Activated CD8-positive, alpha-beta memory T cell treated with anti-CD3 and anti-CD28 coated beads, Interleukin-2, amount 10 ng/mL, durations not matched to agents 7 days and 5 days (primary cell): ENCODE measurements at regions of chr13 and their contacts with region 1.

Region 1: DNA sequence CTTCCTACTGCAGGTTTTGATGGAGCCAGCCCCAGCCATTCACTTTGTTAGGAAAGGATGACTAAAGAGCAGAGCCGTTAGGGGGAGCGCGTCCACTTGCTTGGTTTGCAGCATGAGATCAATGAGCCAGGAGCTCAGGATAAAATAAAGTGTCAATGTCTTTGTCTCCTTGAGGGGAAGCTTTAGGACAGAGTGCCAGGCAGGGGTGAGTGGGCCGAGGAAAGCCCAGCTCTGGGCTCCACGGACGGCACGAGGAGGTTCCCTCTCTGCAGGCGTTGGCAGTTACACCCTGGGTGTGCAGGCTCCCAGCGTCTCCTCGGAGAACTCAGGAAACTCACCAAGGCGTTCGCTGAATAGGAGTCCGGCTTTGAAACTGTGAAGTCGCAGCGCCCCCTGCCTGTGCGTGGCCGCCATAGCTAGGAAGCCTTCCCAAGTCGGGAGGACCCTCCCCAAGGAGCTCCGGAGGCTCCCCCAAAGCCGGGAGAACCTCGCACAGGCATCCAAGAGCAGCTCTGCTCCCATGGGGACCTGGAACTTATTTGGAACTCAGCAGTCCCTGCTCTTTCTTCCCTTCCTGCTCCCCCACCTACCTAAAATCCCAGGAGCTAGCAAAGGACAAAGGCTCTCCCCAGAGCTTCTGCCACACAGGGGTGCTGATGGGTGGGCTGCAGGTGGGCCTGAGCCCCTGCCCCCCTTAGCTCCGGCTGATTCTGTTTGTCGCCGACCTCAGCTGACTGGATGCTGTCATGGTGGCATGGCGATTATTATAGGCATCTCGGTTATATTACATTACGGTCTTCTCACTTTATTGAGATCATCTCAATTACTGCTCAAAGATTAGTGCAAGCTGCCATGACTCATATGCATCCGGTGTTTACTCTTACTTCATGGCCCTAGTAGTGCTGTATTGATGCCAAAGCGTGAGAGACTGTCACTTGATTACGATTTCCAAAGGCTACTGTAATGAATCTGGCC is 34.4 kb downstream of the GSX1 start:
- DNase-seq: peak; percentile 69
- ATAC-seq: peak; percentile 63
- H3K4me3 Mint-ChIP-seq: no peak overlapping the region
- H3K27ac Mint-ChIP-seq: no peak overlapping the region
- H3K4me1 Mint-ChIP-seq: peaks cover 18% of the 10 kb centered on the region
- H3K27me3 Mint-ChIP-seq: peaks cover 87% of the 10 kb centered on the region

Region 2: DNA sequence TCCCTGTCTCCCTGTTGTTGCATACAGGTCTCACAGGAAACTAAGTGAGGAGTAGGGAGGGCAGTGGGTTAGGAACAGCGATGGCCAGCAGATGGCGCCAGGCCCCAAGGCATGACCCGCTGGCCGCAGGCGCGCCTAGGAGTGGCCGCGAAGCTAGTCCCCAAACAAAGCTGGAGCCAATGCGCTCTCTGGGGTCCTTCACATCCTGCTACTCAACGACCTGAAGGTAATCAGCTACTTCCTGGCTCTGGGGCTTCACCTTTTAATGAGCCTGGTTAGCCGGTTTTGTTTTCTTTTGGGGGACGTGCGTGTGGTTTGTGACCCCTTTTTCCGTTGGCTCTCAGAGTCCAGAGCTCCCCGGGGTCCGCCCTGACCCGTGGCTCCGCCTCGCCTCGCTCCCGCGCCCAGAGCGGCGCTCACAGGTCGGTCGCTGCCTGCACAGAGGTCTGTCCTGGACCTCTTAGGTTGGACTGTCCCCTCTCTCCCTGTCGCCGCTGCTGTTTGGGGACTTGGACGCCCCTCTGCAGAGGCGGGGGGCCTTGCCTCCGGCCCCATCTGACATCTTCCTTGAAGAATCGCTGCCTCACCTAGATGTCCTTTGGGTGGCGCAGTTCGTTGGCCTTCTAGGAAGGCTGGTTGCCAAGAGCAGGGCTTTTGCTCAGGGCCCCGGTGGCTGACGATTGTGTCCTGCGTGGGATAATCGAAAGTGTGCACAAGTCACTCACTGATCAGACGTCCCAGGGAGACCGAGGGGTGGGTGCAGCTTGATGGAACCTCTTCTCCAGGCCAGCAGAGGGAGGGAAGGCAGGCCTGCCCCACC is 464.4 kb before region 1 on chr13:
- CTCF ChIA-PET with region 1: interaction called, 167 read pairs
- DNase-seq: peak; percentile 89
- ATAC-seq: peak; percentile 96
- H3K4me3 Mint-ChIP-seq: peak overlapping the region; percentile 50
- H3K27ac Mint-ChIP-seq: no peak overlapping the region
- H3K4me1 Mint-ChIP-seq: peaks cover 9% of the 10 kb centered on the region
- H3K27me3 Mint-ChIP-seq: peaks cover 31% of the 10 kb centered on the region

Region 3: DNA sequence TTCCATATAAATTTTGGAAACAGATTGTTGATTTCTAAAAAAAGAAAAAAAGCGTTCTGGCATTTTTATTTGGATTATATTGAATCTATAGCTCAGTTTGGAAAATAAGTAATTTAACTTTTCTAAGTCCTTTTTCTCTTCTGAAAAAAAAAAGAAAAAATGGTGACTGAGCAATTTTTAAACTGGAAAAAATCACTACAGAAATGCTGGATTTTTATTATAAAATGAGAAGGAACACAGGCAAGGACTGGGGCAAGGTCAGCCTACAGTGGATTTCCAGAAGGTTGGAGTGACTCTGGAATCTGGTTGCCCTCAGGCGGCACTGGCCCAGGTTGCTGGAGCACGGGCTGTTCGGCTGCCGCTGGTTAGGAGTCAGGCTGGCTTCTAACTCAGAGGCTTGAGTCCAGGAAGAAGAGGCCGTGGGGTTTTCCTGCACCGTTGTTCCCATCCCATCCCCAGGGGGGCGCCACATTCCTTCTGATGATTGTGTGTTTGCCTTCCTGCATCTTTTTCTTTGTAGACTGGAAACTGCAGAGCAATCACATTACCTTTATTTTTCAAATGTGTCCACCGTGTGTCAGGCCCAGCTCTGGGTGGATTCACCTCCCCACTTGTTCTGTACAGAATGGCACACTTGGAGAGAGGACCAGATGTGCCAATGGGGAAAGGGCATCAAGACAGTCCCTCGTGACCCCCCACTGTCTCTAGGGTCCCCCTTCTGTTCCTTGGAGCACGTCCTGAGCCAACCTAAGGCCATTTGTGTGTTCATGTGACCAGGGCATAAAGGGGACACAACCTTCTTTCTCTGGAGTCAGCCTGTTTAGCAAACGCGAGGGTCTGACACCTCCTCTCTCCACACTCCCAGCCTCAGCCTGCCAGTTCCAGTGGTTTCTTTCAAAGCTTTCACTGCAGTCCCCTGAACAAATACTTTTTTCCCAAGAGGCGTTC is 446.7 kb before region 1 on chr13:
- CTCF ChIA-PET with region 1: interaction called, 29 read pairs
- DNase-seq: peak; percentile 72
- ATAC-seq: peak; percentile 65
- H3K4me3 Mint-ChIP-seq: no peak overlapping the region
- H3K27ac Mint-ChIP-seq: no peak overlapping the region
- H3K4me1 Mint-ChIP-seq: peaks cover 1% of the 10 kb centered on the region
- H3K27me3 Mint-ChIP-seq: peaks cover 12% of the 10 kb centered on the region

Region 4: GRCh38 chr13:27770809-27771208 is 55.9 kb before region 1 on chr13:
- CTCF ChIA-PET with region 1: interaction called, 46 read pairs
- DNase-seq: peak; percentile 51
- ATAC-seq: no peak
- H3K4me3 Mint-ChIP-seq: no peak overlapping the region
- H3K27ac Mint-ChIP-seq: no peak overlapping the region
- H3K4me1 Mint-ChIP-seq: no peaks in the 10 kb centered on the region
- H3K27me3 Mint-ChIP-seq: peaks cover 34% of the 10 kb centered on the region

Region 5: DNA sequence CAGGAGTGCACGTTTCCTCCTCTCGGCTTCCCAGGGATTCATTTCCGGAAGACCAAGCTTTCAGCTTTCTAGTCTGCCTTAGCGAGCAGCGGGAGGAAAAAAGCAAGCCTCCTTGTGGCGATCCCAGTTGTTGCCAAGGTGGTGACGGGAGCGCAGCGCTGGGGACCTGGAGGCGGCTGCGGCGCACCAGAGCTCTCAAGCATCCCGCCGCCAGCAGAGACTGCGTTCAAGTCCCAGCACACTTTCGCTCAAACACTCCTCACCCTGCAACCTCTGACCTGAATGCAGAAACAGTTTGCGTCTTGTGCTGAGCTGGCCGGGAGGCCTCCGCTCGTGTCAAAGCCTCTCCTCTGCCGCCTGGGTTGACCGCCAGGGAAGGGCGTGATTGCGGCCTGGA is 29.4 kb before region 1 on chr13:
- CTCF ChIA-PET with region 1: interaction called, 16 read pairs
- DNase-seq: no peak
- ATAC-seq: no peak
- H3K4me3 Mint-ChIP-seq: no peak overlapping the region
- H3K27ac Mint-ChIP-seq: no peak overlapping the region
- H3K4me1 Mint-ChIP-seq: peaks cover 5% of the 10 kb centered on the region
- H3K27me3 Mint-ChIP-seq: peaks cover 87% of the 10 kb centered on the region

Region 6: GRCh38 chr13:27953676-27954405 is 127.2 kb after region 1 on chr13:
- CTCF ChIA-PET with region 1: interaction called, 28 read pairs
- DNase-seq: peak; percentile 68
- ATAC-seq: peak; percentile 96
- H3K4me3 Mint-ChIP-seq: peak overlapping the region; percentile 59
- H3K27ac Mint-ChIP-seq: no peak overlapping the region
- H3K4me1 Mint-ChIP-seq: peaks cover 11% of the 10 kb centered on the region
- H3K27me3 Mint-ChIP-seq: peaks cover 71% of the 10 kb centered on the region

Region 7: GRCh38 chr13:27985600-27985999 is 158.9 kb after region 1 on chr13:
- CTCF ChIA-PET with region 1: interaction called, 77 read pairs
- DNase-seq: no peak
- ATAC-seq: no peak
- H3K4me3 Mint-ChIP-seq: no peak overlapping the region
- H3K27ac Mint-ChIP-seq: no peak overlapping the region
- H3K4me1 Mint-ChIP-seq: no peaks in the 10 kb centered on the region
- H3K27me3 Mint-ChIP-seq: peaks cover 40% of the 10 kb centered on the region